ENCODE measurements at regions of chr3 and their contacts with region 1.

Region 1: GRCh38 chr3:113676261-113676660 is 20.2 kb downstream of the USF3 start:
- DNase-seq: no peak
- ATAC-seq: peak; percentile 67
- H3K4me3 Mint-ChIP-seq: peak overlapping the region; percentile 29
- H3K27ac Mint-ChIP-seq: peak overlapping the region; percentile 89
- H3K4me1 Mint-ChIP-seq: peaks cover 37% of the 10 kb centered on the region
- H3K27me3 Mint-ChIP-seq: no peaks in the 10 kb centered on the region
- CTCF ChIP-seq: no peak

Region 2: GRCh38 chr3:112973325-112974177 is 702.7 kb before region 1 on chr3:
- CTCF ChIA-PET with region 1: no interaction called
- POLR2A ChIA-PET with region 1: no interaction called
- intact Hi-C with region 1: no loop called
- DNase-seq: no peak
- ATAC-seq: peak; percentile 75
- H3K4me3 Mint-ChIP-seq: peak overlapping the region; percentile 84
- H3K27ac Mint-ChIP-seq: peak overlapping the region; percentile 76
- H3K4me1 Mint-ChIP-seq: peaks cover 80% of the 10 kb centered on the region
- H3K27me3 Mint-ChIP-seq: no peaks in the 10 kb centered on the region
- CTCF ChIP-seq: no peak

Region 3: DNA sequence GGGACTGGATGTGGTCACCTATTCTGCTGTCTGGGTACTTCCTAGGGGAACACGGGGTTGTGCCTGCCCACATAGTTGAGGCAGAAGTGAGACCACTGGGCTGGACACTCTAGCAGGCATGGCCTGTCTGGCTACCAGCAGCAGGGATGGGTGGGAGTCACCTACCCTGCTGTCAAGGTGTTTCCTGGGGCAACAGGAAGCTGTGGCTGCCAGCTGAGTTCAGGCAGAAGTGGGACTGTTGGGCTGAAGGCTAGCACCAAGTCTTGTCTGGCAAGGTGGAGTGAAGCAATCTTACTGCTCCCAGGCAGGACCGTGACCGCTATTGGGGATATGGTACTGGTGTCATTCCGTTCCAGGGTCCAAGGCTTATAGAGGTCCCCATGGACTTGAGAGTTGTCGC is 251.3 kb after region 1 on chr3:
- CTCF ChIA-PET with region 1: no interaction called
- POLR2A ChIA-PET with region 1: interaction called, 10 read pairs
- intact Hi-C with region 1: no loop called
- DNase-seq: no peak
- ATAC-seq: no peak
- H3K4me3 Mint-ChIP-seq: no peak overlapping the region
- H3K27ac Mint-ChIP-seq: no peak overlapping the region
- H3K4me1 Mint-ChIP-seq: peaks cover 8% of the 10 kb centered on the region
- H3K27me3 Mint-ChIP-seq: no peaks in the 10 kb centered on the region
- CTCF ChIP-seq: no peak